PC-3 (cell line): ENCODE measurements at regions of chr15 and their contacts with region 1.

Region 1: GRCh38 chr15:49675041-49675440 is 54.2 kb downstream of the DTWD1 start:
- DNase-seq: peak; percentile 88
- ATAC-seq: peak; percentile 98
- H3K4me3 ChIP-seq: peak overlapping the region; percentile 32; the same call in 1 of the 2 replicates
- H3K27ac ChIP-seq: peak overlapping the region; percentile 88
- H3K4me1 ChIP-seq: peaks cover 29% of the 10 kb centered on the region
- H3K27me3 ChIP-seq: no peaks in the 10 kb centered on the region
- CTCF ChIP-seq: peak; percentile 45; the same call in 1 of the 2 replicates

Region 2: GRCh38 chr15:51011212-51011611 is 1336.2 kb after region 1 on chr15:
- CTCF ChIA-PET with region 1: no interaction called
- POLR2A ChIA-PET with region 1: interaction called, 14 read pairs
- intact Hi-C with region 1: no loop called
- DNase-seq: no peak
- ATAC-seq: no peak
- H3K4me3 ChIP-seq: no peak overlapping the region
- H3K27ac ChIP-seq: no peak overlapping the region
- H3K4me1 ChIP-seq: no peaks in the 10 kb centered on the region
- H3K27me3 ChIP-seq: no peaks in the 10 kb centered on the region
- CTCF ChIP-seq: no peak